Caco-2 (cell line): ENCODE measurements at regions of chr20 and their contacts with region 1.

Region 1: GRCh38 chr20:63864847-63865640 is at the start of gene TPD52L2:
- DNase-seq: peak; percentile 100
- H3K4me3 ChIP-seq: peak within 1 kb of the TSS; percentile 97
- H3K4me3 Mint-ChIP-seq: peak within 1 kb of the TSS; percentile 90
- H3K27ac Mint-ChIP-seq: peak within 1 kb of the TSS; percentile 91
- H3K4me1 ChIP-seq: peaks cover 15% of the 10 kb centered on the region
- H3K4me1 Mint-ChIP-seq: peaks cover 8% of the 10 kb centered on the region
- H3K27me3 ChIP-seq: no peaks in the 10 kb centered on the region
- H3K27me3 Mint-ChIP-seq: no peaks in the 10 kb centered on the region
- CTCF ChIP-seq: no peak
- total RNA-seq, gene TPD52L2: 286 and 293 TPM in 2 replicates

Region 2: DNA sequence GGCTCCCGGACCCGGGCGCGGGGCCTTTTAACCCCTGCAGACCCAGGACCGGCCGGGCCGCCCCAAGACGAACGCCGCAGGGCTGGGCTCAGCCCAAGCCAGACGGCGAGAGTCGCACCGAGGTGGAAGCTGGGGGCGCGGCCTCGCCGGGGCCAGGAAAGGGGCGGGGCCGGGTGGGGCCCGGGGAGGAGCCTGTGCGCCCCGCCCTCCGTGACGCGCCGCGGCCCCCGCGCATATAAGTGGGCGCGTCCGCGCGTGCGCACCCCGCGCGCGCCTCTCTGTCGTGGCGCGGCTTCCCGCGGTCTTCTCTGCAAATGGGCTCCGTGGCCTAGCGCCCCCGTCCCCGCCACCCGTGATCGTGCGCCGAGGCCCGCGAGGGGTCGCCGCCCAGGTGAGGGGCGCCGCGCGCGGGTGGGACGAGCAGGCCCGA is 344.5 kb before region 1 on chr20 and contains the start of gene PPDPF:
- CTCF ChIA-PET with region 1: no interaction called
- POLR2A ChIA-PET with region 1: interaction called, 10 read pairs
- intact Hi-C with region 1: no loop called
- DNase-seq: peak in 1 of 2 experiments; percentile 90
- H3K4me3 ChIP-seq: peak within 1 kb of the TSS; percentile 97
- H3K4me3 Mint-ChIP-seq: peak within 1 kb of the TSS; percentile 92
- H3K27ac Mint-ChIP-seq: peak within 1 kb of the TSS; percentile 95
- H3K4me1 ChIP-seq: peaks cover 14% of the 10 kb centered on the region
- H3K4me1 Mint-ChIP-seq: no peaks in the 10 kb centered on the region
- H3K27me3 ChIP-seq: no peaks in the 10 kb centered on the region
- H3K27me3 Mint-ChIP-seq: no peaks in the 10 kb centered on the region
- CTCF ChIP-seq: no peak
- total RNA-seq, gene PPDPF: 511 and 634 TPM in 2 replicates

Region 3: DNA sequence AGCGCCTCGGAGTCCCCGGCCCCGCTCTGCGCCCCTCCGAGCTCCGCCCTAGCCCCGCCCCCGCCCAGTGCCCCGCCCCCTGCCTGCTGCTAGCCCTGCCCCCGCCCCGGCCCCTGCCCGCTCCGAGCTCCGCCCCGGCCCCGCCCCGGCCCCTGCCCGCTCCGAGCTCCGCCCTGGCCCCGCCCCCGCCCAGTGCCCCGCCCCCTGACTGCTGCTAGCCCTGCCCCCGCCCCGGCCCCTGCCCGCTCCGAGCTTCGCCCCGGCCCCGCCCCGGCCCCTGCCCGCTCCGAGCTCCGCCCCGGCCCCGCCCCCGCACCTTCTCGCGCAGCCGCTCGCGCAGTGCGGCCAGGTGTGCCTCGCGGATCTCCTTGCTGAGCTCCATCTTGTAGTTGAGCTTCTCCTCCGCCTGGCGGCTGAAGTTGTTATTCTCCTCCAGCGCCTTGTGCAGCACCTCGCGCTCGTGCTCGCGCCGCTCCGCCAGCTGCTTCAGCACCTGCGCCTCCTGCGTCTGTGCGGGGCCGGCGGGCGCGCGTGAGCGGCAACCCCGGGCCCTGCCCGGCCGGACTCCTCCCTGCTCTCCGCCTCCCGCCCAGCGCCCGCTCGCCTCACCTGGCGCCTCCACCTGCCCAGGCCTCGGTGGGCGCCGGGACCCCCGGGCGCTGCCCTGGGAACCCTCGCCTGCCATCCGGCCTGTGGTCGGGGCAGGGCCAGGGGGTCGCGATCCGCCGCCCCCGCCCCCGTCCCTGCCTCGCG is 223.1 kb before region 1 on chr20:
- CTCF ChIA-PET with region 1: interaction called, 5 read pairs
- POLR2A ChIA-PET with region 1: interaction called, 13 read pairs
- intact Hi-C with region 1: no loop called
- DNase-seq: peak; percentile 100
- H3K4me3 ChIP-seq: peak overlapping the region; percentile 73
- H3K4me3 Mint-ChIP-seq: peak overlapping the region; percentile 79
- H3K27ac Mint-ChIP-seq: peak overlapping the region; percentile 67
- H3K4me1 ChIP-seq: peaks cover 21% of the 10 kb centered on the region
- H3K4me1 Mint-ChIP-seq: peaks cover 8% of the 10 kb centered on the region
- H3K27me3 ChIP-seq: no peaks in the 10 kb centered on the region
- H3K27me3 Mint-ChIP-seq: no peaks in the 10 kb centered on the region
- CTCF ChIP-seq: peak; percentile 72 to 92

Region 4: DNA sequence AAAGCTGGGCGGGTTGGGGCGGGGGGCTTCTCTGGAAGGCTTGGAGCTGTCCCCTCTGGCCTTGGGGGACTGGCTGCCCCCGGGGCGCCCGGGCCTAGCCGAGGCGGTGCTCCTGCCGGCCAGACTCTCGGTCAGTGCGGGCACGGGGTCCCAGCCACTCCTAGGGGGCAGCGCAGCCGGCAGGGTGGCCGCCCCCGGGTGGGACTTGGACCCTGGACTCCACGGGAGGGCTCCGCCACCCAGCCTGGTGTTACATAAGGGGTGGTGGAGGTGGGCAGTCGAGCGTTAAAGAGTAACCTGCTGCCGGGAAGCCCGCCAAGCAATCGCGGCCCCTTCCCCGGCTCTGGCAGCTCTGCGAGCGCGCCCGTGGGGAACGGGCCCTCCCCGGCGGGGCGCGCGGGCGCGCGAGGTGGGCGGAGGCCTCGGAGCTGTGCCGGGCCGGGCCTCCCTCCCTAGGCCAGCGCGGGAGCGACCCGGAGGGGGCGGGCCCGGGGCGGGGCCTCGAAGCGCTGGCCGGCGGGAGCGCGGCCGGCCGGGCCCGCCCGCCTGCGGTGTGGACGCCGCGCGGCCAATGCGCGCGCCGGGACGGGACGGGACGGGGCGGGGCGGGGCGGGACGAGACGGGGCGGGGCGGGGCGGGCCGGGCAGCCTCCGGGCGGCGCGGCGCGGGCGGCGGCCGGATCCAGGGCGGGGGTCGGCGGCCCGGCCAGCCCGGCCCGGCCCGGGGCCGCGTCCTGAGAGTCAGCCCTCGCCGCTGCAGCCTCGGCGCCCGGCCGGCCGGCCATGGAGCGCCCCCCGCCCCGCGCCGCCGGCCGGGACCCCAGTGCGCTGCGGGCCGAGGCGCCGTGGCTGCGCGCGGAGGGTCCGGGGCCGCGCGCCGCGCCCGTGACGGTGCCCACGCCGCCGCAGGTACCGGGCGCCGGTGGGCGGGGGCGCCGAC is 125.6 kb before region 1 on chr20 and contains the start of gene SLC2A4RG:
- CTCF ChIA-PET with region 1: interaction called, 6 read pairs
- POLR2A ChIA-PET with region 1: interaction called, 22 read pairs
- intact Hi-C with region 1: no loop called
- DNase-seq: peak; percentile 85 to 96
- H3K4me3 ChIP-seq: peak within 1 kb of the TSS; percentile 72
- H3K4me3 Mint-ChIP-seq: peak within 1 kb of the TSS; percentile 88
- H3K27ac Mint-ChIP-seq: peak within 1 kb of the TSS; percentile 87
- H3K4me1 ChIP-seq: peaks cover 24% of the 10 kb centered on the region
- H3K4me1 Mint-ChIP-seq: no peaks in the 10 kb centered on the region
- H3K27me3 ChIP-seq: no peaks in the 10 kb centered on the region
- H3K27me3 Mint-ChIP-seq: no peaks in the 10 kb centered on the region
- CTCF ChIP-seq: no peak
- total RNA-seq, gene SLC2A4RG: 211 and 234 TPM in 2 replicates

Region 5: GRCh38 chr20:63831696-63832686 is 33.1 kb before region 1 on chr20:
- CTCF ChIA-PET with region 1: no interaction called
- POLR2A ChIA-PET with region 1: interaction called, 3 read pairs
- intact Hi-C with region 1: loop called (anchors 2 kb)
- DNase-seq: peak; percentile 82 to 86
- H3K4me3 ChIP-seq: peak overlapping the region; percentile 59
- H3K4me3 Mint-ChIP-seq: peak overlapping the region; percentile 66
- H3K27ac Mint-ChIP-seq: no peak overlapping the region
- H3K4me1 ChIP-seq: peaks cover 36% of the 10 kb centered on the region
- H3K4me1 Mint-ChIP-seq: peaks cover 23% of the 10 kb centered on the region
- H3K27me3 ChIP-seq: peaks cover 11% of the 10 kb centered on the region
- H3K27me3 Mint-ChIP-seq: peaks cover 9% of the 10 kb centered on the region
- CTCF ChIP-seq: no peak

Region 6: DNA sequence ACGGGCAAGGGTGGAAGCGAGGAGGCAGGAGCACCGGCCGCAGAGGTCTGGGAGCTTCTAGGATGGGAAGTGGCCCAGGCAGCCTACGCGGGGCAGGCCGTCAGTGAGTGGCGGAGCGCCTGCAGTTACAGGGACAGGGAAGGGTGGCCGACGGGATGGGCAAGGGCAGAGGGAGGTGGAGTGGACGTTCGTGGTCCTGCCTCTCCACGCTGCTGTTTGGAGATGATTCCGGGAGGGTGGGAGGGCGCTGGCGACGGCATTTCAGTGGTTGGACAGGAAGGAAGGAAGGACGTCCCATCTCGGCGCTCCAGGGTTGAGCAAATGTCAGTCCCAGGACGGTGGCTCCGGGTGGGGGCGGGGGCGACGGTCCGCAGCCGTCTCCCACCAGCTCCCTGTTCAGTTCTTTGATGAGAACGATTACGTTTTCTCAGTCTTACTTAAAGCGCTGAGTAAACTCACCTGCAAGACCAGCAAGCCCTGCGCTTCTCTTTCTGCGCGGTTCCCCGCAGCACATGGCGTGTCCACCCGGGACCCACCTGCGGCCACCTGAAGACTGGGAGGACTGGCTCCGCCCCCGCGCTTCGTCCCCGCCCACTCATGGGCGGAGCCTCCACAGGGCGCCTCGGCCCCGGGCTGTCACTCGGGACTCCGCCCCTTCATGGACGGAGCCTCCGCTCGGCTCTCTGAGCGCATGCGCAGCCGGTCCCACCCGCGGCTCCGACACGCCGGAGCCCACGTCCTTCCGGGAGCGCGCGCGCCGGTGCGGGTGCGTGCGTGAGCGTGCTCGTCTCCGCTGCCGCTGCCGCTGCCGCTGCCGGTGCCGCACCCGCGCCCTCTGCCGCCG is 29.5 kb after region 1 on chr20 and contains the start of gene DNAJC5:
- CTCF ChIA-PET with region 1: interaction called, 6 read pairs
- POLR2A ChIA-PET with region 1: interaction called, 49 read pairs
- intact Hi-C with region 1: loop called (anchors 1 kb)
- DNase-seq: peak; percentile 99 to 100
- H3K4me3 ChIP-seq: peak within 1 kb of the TSS; percentile 61
- H3K4me3 Mint-ChIP-seq: peak within 1 kb of the TSS; percentile 76
- H3K27ac Mint-ChIP-seq: peak within 1 kb of the TSS; percentile 85
- H3K4me1 ChIP-seq: peaks cover 27% of the 10 kb centered on the region
- H3K4me1 Mint-ChIP-seq: peaks cover 27% of the 10 kb centered on the region
- H3K27me3 ChIP-seq: no peaks in the 10 kb centered on the region
- H3K27me3 Mint-ChIP-seq: no peaks in the 10 kb centered on the region
- CTCF ChIP-seq: no peak
- total RNA-seq, gene DNAJC5: 117 and 124 TPM in 2 replicates

Region 7: GRCh38 chr20:63913768-63914167 is 48.7 kb after region 1 on chr20:
- CTCF ChIA-PET with region 1: no interaction called
- POLR2A ChIA-PET with region 1: no interaction called
- intact Hi-C with region 1: no loop called
- DNase-seq: no peak
- H3K4me3 ChIP-seq: no peak overlapping the region
- H3K4me3 Mint-ChIP-seq: no peak overlapping the region
- H3K27ac Mint-ChIP-seq: no peak overlapping the region
- H3K4me1 ChIP-seq: peaks cover 11% of the 10 kb centered on the region; the same call in 1 of the 2 replicates
- H3K4me1 Mint-ChIP-seq: peaks cover 22% of the 10 kb centered on the region
- H3K27me3 ChIP-seq: no peaks in the 10 kb centered on the region
- H3K27me3 Mint-ChIP-seq: no peaks in the 10 kb centered on the region
- CTCF ChIP-seq: no peak

Region 8: DNA sequence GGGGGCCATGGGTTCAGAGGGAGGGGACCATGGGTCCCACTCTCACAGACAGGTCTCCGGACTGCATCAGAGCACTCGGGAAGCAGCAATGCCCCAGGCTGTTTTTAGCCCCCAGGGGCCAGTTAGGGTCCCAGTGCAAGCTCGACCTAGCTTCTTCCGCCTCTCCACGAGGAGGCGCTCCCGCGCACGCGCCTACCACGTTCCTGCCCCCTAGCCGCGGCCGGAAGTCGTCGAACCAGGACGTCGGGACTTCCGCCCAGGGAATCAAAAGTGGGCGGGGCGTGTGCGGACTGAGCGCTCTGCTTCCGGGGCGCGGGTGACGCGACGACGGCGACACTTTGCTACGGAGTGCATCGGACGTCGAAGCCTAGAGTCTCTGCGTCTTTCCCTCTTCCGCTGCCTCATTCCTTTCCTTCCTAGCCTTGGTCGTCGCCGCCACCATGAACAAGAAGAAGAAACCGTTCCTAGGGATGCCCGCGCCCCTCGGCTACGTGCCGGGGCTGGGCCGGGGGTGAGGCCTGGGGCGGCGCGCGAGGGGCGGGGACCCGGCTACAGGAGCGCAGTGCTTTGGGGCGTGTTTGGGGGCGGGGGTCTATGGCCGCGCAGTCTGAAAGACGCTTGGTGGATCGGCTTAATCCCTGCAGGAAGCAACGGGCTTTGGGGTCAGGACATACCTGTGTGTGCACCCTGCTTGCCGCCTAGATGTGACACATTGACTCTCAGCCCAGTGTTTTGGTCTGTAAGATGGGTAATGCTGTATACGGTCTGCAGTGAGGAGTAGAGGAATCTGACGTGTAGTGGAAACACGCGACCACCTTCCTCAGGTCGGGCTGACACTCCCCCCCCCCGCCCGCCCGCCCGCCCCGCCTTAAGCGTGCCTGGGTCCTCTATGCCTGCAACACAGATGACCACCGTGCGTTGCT is 116.0 kb after region 1 on chr20 and contains the start of gene PRPF6:
- CTCF ChIA-PET with region 1: interaction called, 9 read pairs
- POLR2A ChIA-PET with region 1: interaction called, 26 read pairs
- intact Hi-C with region 1: no loop called
- DNase-seq: peak; percentile 99 to 100
- H3K4me3 ChIP-seq: peak within 1 kb of the TSS; percentile 58
- H3K4me3 Mint-ChIP-seq: peak within 1 kb of the TSS; percentile 90
- H3K27ac Mint-ChIP-seq: peak within 1 kb of the TSS; percentile 65
- H3K4me1 ChIP-seq: peaks cover 31% of the 10 kb centered on the region
- H3K4me1 Mint-ChIP-seq: peaks cover 30% of the 10 kb centered on the region
- H3K27me3 ChIP-seq: no peaks in the 10 kb centered on the region
- H3K27me3 Mint-ChIP-seq: no peaks in the 10 kb centered on the region
- CTCF ChIP-seq: peak; percentile 99 to 100
- total RNA-seq, gene PRPF6: 176 and 181 TPM in 2 replicates

Region 9: GRCh38 chr20:64106981-64107735 is 242.1 kb after region 1 on chr20 and contains the start of gene NPBWR2:
- CTCF ChIA-PET with region 1: no interaction called
- POLR2A ChIA-PET with region 1: no interaction called
- intact Hi-C with region 1: no loop called
- DNase-seq: peak in 1 of 2 experiments; percentile 56
- H3K4me3 ChIP-seq: no peak within 1 kb of the TSS
- H3K4me3 Mint-ChIP-seq: no peak within 1 kb of the TSS
- H3K27ac Mint-ChIP-seq: no peak within 1 kb of the TSS
- H3K4me1 ChIP-seq: no peaks in the 10 kb centered on the region
- H3K4me1 Mint-ChIP-seq: no peaks in the 10 kb centered on the region
- H3K27me3 ChIP-seq: no peaks in the 10 kb centered on the region; the same call in 1 of the 2 replicates
- H3K27me3 Mint-ChIP-seq: peaks cover 17% of the 10 kb centered on the region
- CTCF ChIP-seq: no peak
- total RNA-seq, gene NPBWR2: not detected in 2 replicates